A549 (cell line): ENCODE measurements at regions of chr6 and their contacts with region 1.

Region 1: DNA sequence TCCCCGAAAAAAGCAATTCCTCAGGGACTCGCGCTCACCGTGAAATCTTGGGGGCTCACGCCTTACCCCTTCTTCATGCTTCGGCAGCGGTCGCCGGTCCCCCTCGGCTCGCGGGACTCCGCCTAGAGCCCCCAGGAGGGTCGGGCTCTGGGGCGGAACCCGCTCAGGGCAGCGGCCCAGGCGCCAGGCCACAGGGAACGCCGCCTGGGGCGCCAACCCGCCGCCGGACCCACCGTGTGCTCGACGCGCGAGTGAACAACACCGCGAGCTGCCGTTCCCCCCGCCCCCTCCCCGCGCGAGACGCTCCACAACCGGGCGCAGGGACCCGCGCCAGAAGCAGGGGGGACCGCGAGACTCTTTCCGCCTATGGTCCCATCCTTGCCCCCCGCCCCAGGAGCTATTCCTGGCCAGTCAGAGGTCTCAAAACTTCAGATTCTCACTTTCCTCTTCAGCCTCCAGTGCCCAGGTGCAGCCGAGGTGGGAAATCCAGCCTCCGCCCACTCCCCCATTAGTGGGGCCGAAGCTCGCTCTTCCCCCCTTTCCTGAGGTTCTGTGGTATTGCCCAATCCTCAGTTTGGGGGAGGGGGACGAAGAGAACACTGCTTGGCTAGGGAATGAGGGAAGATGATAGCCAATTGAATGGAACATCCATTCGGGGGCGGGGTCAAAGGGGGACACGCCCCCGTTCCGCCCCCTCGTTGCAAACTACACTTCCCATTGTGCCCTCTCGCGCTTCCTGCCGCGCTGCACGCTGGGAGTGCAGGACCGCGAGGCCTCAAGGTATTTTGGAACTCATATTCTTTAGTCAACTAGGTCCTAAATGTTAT is at the start of gene WASF1:
- DNase-seq: peak; percentile 62 to 96
- ATAC-seq: peak; percentile 85 to 92
- H3K4me3 ChIP-seq: peak within 1 kb of the TSS; percentile 95
- H3K27ac ChIP-seq: peak within 1 kb of the TSS; percentile 94 to 96
- H3K4me1 ChIP-seq: peaks cover 43% of the 10 kb centered on the region
- CTCF ChIP-seq: no peak
- EP300 ChIP-seq: no peak
- POLR2A ChIP-seq: peak; percentile 44
- RAD21 ChIP-seq: no peak
- polyA plus RNA-seq, gene WASF1: 18.2 and 21.0 TPM in 2 replicates

Region 2: GRCh38 chr6:110140650-110141049 is 39.0 kb before region 1 on chr6:
- CTCF ChIA-PET with region 1: no interaction called
- POLR2A ChIA-PET with region 1: no interaction called
- DNase-seq: peak; percentile 1 to 36
- ATAC-seq: peak in 1 of 2 experiments; percentile 89; a peak in 3 of 6 replicates
- H3K4me3 ChIP-seq: no peak overlapping the region
- H3K27ac ChIP-seq: peak overlapping the region; percentile 61 to 70; a peak in 5 of 6 replicates
- H3K4me1 ChIP-seq: peaks cover 9% of the 10 kb centered on the region; the same call in 2 of the 3 replicates
- CTCF ChIP-seq: no peak
- EP300 ChIP-seq: no peak
- POLR2A ChIP-seq: no peak
- RAD21 ChIP-seq: no peak

Region 3: GRCh38 chr6:110226261-110226660 is 46.6 kb after region 1 on chr6:
- CTCF ChIA-PET with region 1: no interaction called
- POLR2A ChIA-PET with region 1: no interaction called
- DNase-seq: no peak
- ATAC-seq: no peak
- H3K4me3 ChIP-seq: no peak overlapping the region
- H3K27ac ChIP-seq: no peak overlapping the region
- H3K4me1 ChIP-seq: no peaks in the 10 kb centered on the region
- CTCF ChIP-seq: no peak
- EP300 ChIP-seq: no peak
- POLR2A ChIP-seq: no peak
- RAD21 ChIP-seq: no peak

Region 4: DNA sequence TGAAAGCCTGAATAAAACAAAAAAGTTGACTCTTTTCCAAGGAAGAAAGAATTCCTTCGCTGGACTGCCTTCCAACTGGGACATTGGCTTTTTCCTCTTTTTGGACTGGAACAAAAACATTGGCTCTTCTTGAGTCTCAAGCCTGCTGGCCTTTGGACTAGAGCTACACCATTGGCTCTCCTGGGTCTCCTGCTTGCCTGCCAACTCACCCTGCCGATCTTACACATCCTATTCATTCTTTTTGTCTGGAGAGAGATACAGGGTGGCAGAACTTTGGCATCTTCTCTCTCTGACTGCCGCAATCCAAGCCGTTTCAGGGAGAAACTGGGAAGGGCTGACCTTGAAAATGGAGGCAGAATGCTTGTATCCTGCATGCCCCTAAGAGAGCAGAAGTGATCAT is 215.6 kb after region 1 on chr6:
- CTCF ChIA-PET with region 1: interaction called, 13 read pairs
- POLR2A ChIA-PET with region 1: no interaction called
- DNase-seq: no peak
- ATAC-seq: no peak
- H3K4me3 ChIP-seq: no peak overlapping the region
- H3K27ac ChIP-seq: no peak overlapping the region
- H3K4me1 ChIP-seq: no peaks in the 10 kb centered on the region
- CTCF ChIP-seq: no peak
- EP300 ChIP-seq: no peak
- POLR2A ChIP-seq: no peak
- RAD21 ChIP-seq: no peak